H1 (cell line): ENCODE measurements at regions of chr10 and their contacts with region 1.

Region 1: GRCh38 chr10:70381471-70382421 is 679 bp downstream of the LRRC20 start:
- DNase-seq: peak in 1 of 2 experiments; percentile 89
- H3K4me3 ChIP-seq: peak overlapping the region; percentile 76 to 88 (median 80)
- H3K27ac ChIP-seq: peak overlapping the region; percentile 43; the same call in 1 of the 2 replicates
- H3K4me1 ChIP-seq: peaks cover 0 to 7% (median under 1%) of the 10 kb centered on the region in 4 experiments; a peak in 4 of 7 replicates
- H3K27me3 ChIP-seq: peaks cover 0 to 18% (median 7%) of the 10 kb centered on the region in 4 experiments; a peak in 4 of 7 replicates
- CTCF ChIP-seq: no peak
- EP300 ChIP-seq: no peak
- POLR2A ChIP-seq: no peak
- RAD21 ChIP-seq: no peak

Region 2: GRCh38 chr10:70255329-70256299 is 126.1 kb before region 1 on chr10:
- CTCF ChIA-PET with region 1: interaction called, 10 read pairs
- POLR2A ChIA-PET with region 1: no interaction called
- DNase-seq: no peak
- H3K4me3 ChIP-seq: no peak overlapping the region
- H3K27ac ChIP-seq: no peak overlapping the region
- H3K4me1 ChIP-seq: peaks cover 0 to 2% (median 0%) of the 10 kb centered on the region in 4 experiments; a peak in 1 of 7 replicates
- H3K27me3 ChIP-seq: no peaks in the 10 kb centered on the region
- CTCF ChIP-seq: no peak
- EP300 ChIP-seq: no peak
- POLR2A ChIP-seq: no peak
- RAD21 ChIP-seq: no peak

Region 3: GRCh38 chr10:70355051-70356021 is 26.4 kb before region 1 on chr10:
- CTCF ChIA-PET with region 1: interaction called, 10 read pairs
- POLR2A ChIA-PET with region 1: interaction called, 3 read pairs
- DNase-seq: no peak
- H3K4me3 ChIP-seq: no peak overlapping the region
- H3K27ac ChIP-seq: no peak overlapping the region
- H3K4me1 ChIP-seq: no peaks in the 10 kb centered on the region
- H3K27me3 ChIP-seq: no peaks in the 10 kb centered on the region
- CTCF ChIP-seq: no peak
- EP300 ChIP-seq: no peak
- POLR2A ChIP-seq: no peak
- RAD21 ChIP-seq: no peak

Region 4: DNA sequence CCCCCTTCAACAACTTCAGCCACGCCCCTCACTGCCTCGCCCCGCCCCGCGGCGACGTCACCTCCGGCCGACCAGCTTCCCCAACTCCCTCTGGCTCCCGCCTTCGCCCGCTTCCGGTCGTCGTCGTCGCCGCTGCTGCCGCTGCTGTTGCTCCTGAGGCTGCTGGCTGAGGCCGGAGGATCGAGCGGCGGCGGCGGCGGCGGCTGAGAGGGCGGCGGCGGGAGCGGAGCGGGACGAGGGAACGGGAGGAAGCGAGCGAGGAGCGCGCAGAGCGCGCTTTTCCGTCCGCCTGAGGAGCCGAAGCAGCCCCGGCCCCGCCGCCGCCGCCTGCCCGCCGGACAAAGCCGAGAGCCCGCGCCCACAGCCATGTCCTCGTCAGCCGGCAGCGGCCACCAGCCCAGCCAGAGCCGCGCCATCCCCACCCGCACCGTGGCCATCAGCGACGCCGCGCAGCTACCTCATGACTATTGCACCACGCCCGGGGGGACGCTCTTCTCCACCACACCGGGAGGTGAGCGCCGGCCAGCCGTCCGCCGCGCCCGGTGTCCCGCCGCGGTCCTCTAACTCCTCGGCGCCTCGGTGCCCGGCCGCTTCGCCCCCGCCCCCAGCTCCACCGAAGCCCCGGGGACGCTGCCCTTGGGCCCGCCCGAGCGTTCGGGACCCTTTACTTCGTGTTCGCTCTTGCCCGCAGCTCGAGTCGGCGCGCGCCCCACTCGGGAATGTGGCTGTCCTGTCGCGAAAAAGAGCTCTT is 22.5 kb after region 1 on chr10 and contains the start of gene EIF4EBP2:
- CTCF ChIA-PET with region 1: interaction called, 22 read pairs
- POLR2A ChIA-PET with region 1: interaction called, 11 read pairs
- DNase-seq: peak; percentile 93 to 100
- H3K4me3 ChIP-seq: peak within 1 kb of the TSS; percentile 75 to 89 (median 81)
- H3K27ac ChIP-seq: peak within 1 kb of the TSS; percentile 59
- H3K4me1 ChIP-seq: peaks cover 0 to 7% (median 5%) of the 10 kb centered on the region in 4 experiments; a peak in 6 of 7 replicates
- H3K27me3 ChIP-seq: no peaks in the 10 kb centered on the region
- CTCF ChIP-seq: no peak
- EP300 ChIP-seq: no peak
- POLR2A ChIP-seq: peak; percentile 80 to 91
- RAD21 ChIP-seq: no peak
- total RNA-seq, gene EIF4EBP2: 138 and 144 TPM in 2 replicates

Region 5: GRCh38 chr10:70430493-70431445 is 49.0 kb after region 1 on chr10:
- CTCF ChIA-PET with region 1: interaction called, 12 read pairs
- POLR2A ChIA-PET with region 1: interaction called, 3 read pairs
- DNase-seq: no peak
- H3K4me3 ChIP-seq: no peak overlapping the region
- H3K27ac ChIP-seq: no peak overlapping the region
- H3K4me1 ChIP-seq: no peaks in the 10 kb centered on the region; a peak in 1 of 7 replicates
- H3K27me3 ChIP-seq: no peaks in the 10 kb centered on the region
- CTCF ChIP-seq: peak in 2 of 3 experiments; percentile 30 to 46; a peak in 2 of 4 replicates
- EP300 ChIP-seq: no peak
- POLR2A ChIP-seq: no peak
- RAD21 ChIP-seq: peak; percentile 54 to 66